ENCODE measurements at regions of chr1 and their contacts with region 1.

Region 1: DNA sequence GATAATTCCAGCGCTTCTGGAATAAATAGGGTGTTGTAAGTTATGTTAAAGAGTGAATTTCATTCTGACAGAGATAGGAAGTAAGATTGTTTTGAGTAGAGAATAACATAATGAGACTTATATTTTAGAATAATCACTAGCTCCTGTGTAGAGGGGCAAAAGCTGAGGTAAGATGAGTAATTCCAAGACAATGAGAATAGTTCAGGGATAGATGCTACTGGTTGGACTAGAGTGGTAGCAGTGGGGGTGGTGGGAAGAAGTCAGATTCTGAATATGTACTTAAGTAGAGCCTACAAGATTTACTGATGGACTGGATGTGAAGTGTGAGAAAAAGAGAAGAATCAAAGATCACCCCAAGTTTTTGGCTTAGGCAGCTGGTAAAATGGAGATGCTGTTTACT is 23.3 kb upstream of the MOV10 start:
- DNase-seq: no peak
- H3K4me3 Mint-ChIP-seq: no peak overlapping the region
- H3K27ac Mint-ChIP-seq: peak overlapping the region; percentile 13
- H3K4me1 Mint-ChIP-seq: peaks cover 15% of the 10 kb centered on the region
- H3K27me3 Mint-ChIP-seq: no peaks in the 10 kb centered on the region

Region 2: DNA sequence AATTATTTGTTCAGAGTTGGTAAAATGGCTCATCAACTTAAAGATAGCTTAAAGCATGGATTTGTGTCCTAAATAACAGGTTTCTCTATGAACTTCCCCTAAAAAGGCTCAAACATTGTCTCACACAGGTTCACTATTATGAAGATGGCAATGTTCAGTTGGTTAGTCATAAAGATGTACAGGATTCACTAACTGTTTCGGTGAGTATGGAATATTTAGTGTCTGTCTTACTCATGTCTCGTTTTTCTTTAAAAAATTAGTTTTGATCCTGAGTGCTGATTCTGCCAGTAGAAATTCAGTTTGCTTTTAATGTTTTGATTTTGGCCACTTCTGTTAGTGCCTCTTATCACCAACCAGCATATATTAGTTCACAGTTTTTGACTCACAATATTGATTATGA is 15.7 kb after region 1 on chr1:
- intact Hi-C with region 1: loop called (anchors 2 kb)
- DNase-seq: no peak
- H3K4me3 Mint-ChIP-seq: no peak overlapping the region
- H3K27ac Mint-ChIP-seq: peak overlapping the region; percentile 76
- H3K4me1 Mint-ChIP-seq: peaks cover 28% of the 10 kb centered on the region
- H3K27me3 Mint-ChIP-seq: no peaks in the 10 kb centered on the region

Measured in activated T-helper 1 cell treated with anti-CD3 and anti-CD28 coated beads, Interleukin-12 subunit alpha, Interleukin-12 subunit beta, Interleukin-2, Interleukin-4 antibody, amounts not matched to agents 30 ng/mL and 10 ng/mL and 1 ng/mL, durations not matched to agents 14 hours and 24 hours and 36 hours (primary cell).